Dendritic cell treated with granulocyte-macrophage colony-stimulating factor and Interleukin-4, amounts not matched to agents 40 ng/mL and 50 ng/mL, for 4 days (primary cell): ENCODE measurements at regions of chr1 and their contacts with region 1.

Region 1: DNA sequence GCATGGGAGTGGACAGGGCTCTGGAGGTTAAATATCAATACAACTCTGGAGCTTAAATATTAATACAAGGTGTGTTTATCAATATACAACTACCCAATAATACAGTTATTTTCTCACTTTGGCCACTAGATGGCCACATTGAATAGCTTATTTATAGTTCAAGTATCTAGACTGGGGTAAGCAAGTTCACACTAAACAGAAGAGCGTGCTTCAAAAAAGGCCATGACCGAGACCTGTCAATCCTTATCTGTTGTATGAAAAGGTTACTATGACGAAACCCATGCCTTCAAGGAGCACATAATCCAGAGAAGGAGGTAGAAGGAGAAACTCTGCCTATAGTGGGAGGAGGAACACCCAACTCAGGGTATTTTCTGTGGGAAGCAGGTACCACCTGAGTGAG is 29.1 kb downstream of the CHML start:
- H3K4me3 Mint-ChIP-seq: no peak overlapping the region
- H3K27ac Mint-ChIP-seq: no peak overlapping the region
- H3K4me1 Mint-ChIP-seq: peaks cover 33% of the 10 kb centered on the region
- H3K27me3 Mint-ChIP-seq: no peaks in the 10 kb centered on the region

Region 2: DNA sequence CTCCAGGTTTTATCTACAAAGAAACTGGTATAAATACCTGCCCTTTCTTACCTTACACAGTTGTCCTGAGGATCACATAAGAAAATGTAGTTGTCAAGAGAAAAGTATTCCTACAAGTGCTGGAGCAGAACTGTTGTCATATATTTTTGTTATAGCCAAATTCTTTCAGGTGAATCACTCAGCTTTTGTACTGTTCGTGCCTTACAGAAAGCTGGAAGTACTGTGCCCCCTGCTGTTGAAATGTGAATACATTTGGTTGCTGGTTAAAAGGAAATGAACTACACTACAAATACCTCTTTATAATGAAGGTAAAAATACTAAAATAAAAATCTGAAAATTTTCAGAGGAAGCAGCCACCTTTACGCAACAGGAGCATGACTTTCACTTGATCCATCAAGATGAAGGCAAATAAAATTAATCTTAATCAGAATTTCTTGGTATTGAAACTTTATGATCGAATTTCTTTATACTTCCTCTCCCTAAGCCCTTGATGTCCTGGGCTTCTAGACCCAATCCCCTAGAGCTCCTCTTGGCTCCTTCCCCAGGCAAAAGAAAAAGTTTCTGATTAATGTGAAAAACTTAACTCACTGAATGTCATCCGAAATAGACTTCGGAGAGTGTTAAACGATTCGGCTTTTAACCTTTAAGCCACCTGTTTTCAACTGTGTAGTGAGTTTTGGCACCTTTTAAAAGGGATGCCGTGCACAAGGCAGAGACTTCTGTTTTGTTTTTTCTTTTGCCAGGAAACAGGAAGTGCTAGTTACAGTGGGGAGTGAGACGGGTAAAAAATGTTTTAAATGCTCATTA is 16.6 kb after region 1 on chr1:
- intact Hi-C with region 1: loop called (anchors 1 kb)
- H3K4me3 Mint-ChIP-seq: no peak overlapping the region
- H3K27ac Mint-ChIP-seq: peak overlapping the region; percentile 67
- H3K4me1 Mint-ChIP-seq: peaks cover 22% of the 10 kb centered on the region
- H3K27me3 Mint-ChIP-seq: no peaks in the 10 kb centered on the region

Region 3: GRCh38 chr1:241834733-241835377 is 223.8 kb after region 1 on chr1:
- intact Hi-C with region 1: loop called (anchors 2 kb)
- H3K4me3 Mint-ChIP-seq: no peak overlapping the region
- H3K27ac Mint-ChIP-seq: no peak overlapping the region
- H3K4me1 Mint-ChIP-seq: peaks cover 6% of the 10 kb centered on the region
- H3K27me3 Mint-ChIP-seq: no peaks in the 10 kb centered on the region